Activated naive CD4-positive, alpha-beta T cell treated with anti-CD3 and anti-CD28 coated beads for 36 hours (primary cell): ENCODE measurements at regions of chrX and their contacts with region 1.

Region 1: DNA sequence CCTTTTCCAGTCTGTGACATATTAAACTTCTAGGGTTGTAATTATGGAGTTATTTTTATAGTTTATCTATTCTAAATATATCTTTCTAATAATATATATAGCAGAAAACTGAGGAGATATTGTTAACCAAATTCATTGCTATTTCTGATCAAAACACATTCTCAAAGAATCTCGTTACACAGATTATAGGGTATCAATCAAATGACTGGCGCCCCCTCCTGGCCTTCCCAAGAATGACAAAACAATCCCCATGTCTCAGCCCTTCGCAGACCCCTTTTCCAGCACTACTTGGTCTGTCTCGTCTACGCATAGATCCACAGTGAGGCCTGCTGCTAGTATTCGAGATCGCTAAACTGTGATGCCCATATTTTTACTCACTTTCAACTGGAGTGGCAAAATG is 209.3 kb downstream of the GPC3 start:
- DNase-seq: peak; percentile 64
- H3K4me3 Mint-ChIP-seq: no peak overlapping the region
- H3K27ac Mint-ChIP-seq: no peak overlapping the region
- H3K4me1 Mint-ChIP-seq: no peaks in the 10 kb centered on the region
- H3K27me3 Mint-ChIP-seq: no peaks in the 10 kb centered on the region

Region 2: GRCh38 chrX:132957211-132958090 is 818.6 kb before region 1 on chrX:
- CTCF ChIA-PET with region 1: no interaction called
- intact Hi-C with region 1: loop called (anchors 10 kb)
- DNase-seq: peak; percentile 38
- H3K4me3 Mint-ChIP-seq: peak overlapping the region; percentile 77
- H3K27ac Mint-ChIP-seq: no peak overlapping the region
- H3K4me1 Mint-ChIP-seq: peaks cover 2% of the 10 kb centered on the region
- H3K27me3 Mint-ChIP-seq: peaks cover 31% of the 10 kb centered on the region

Region 3: DNA sequence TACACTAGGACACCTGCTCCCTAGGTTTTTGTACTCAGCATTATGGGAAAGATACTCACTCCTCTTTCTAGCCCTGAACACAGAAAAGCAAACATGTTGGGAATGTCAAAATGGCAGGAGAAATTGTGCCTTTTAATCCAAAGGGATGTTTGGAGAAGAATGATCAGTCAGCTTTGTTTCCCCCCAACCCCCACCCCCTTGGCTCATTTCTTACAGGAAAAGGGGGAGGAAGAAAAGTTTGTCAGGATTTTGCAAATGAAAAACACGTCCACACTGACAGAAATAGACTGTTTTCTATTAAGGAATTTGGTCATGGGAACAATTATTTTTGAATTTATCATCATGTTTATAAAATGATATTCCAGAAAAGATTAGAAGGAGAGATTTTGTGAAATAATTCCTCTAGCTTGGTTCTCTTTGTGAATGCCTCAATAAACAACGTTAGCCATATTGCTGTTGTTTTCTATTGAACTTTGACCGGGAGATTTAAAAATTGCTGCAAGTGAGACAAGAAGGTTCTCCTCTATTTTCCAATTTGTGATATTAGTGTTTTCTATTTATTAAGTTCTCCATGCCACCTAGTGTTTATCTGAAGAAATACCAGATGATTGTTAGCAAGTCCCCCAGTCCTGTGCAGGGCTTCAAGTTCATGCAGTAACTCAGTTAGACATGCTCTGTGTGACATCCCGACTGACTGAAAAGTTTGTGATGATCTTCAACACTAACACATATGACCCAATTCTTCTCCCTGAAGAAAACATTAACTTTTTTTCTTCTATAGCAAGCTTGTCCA is 526.6 kb before region 1 on chrX:
- CTCF ChIA-PET with region 1: no interaction called
- intact Hi-C with region 1: no loop called
- DNase-seq: no peak
- H3K4me3 Mint-ChIP-seq: no peak overlapping the region
- H3K27ac Mint-ChIP-seq: no peak overlapping the region
- H3K4me1 Mint-ChIP-seq: no peaks in the 10 kb centered on the region
- H3K27me3 Mint-ChIP-seq: no peaks in the 10 kb centered on the region

Region 4: GRCh38 chrX:133698298-133698697 is 77.8 kb before region 1 on chrX:
- CTCF ChIA-PET with region 1: interaction called, 6 read pairs
- intact Hi-C with region 1: loop called (anchors 1 kb)
- DNase-seq: no peak
- H3K4me3 Mint-ChIP-seq: no peak overlapping the region
- H3K27ac Mint-ChIP-seq: no peak overlapping the region
- H3K4me1 Mint-ChIP-seq: no peaks in the 10 kb centered on the region
- H3K27me3 Mint-ChIP-seq: no peaks in the 10 kb centered on the region

Region 5: GRCh38 chrX:133745349-133745748 is 30.7 kb before region 1 on chrX:
- CTCF ChIA-PET with region 1: interaction called, 8 read pairs
- intact Hi-C with region 1: loop called (anchors 1 kb)
- DNase-seq: peak; percentile 37
- H3K4me3 Mint-ChIP-seq: no peak overlapping the region
- H3K27ac Mint-ChIP-seq: no peak overlapping the region
- H3K4me1 Mint-ChIP-seq: peaks cover 54% of the 10 kb centered on the region
- H3K27me3 Mint-ChIP-seq: no peaks in the 10 kb centered on the region

Region 6: GRCh38 chrX:133897593-133898163 is 121.6 kb after region 1 on chrX:
- CTCF ChIA-PET with region 1: no interaction called
- intact Hi-C with region 1: no loop called
- DNase-seq: no peak
- H3K4me3 Mint-ChIP-seq: no peak overlapping the region
- H3K27ac Mint-ChIP-seq: no peak overlapping the region
- H3K4me1 Mint-ChIP-seq: no peaks in the 10 kb centered on the region
- H3K27me3 Mint-ChIP-seq: peaks cover 2% of the 10 kb centered on the region

Region 7: DNA sequence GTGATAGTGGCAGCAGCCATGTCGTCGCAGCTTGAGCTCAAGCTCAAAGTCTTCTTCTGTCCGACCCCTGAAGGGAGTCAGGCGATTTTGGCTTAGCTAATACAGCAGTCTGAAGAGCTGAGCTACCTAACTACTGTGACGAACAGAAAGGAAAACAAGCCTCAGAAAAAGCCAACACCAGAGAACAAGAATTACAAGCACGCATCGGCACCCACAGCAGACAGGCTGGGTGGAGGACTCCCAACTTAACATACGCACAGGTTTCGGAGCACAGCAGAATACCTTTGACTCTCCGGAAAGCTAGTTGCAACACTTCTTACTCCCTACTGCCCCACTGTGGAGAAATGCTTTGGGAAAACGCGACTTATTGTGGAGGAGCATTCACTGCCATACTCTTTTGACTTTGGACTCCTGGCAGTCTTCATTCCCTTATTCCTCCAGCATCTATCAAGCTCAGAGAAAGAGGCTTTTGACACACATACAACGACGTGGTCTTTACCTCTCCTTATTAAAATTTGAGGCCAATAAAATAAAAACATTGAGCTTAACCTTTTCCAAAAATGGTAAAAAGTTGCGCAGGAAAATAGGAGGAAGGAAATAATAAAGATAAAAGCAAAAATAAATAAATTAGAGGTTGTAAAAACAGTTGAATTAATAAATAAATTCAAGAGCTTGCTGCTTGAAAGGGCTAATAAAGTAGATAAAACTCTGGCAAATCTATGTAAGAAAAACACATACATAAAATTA is 250.7 kb after region 1 on chrX:
- CTCF ChIA-PET with region 1: no interaction called
- intact Hi-C with region 1: no loop called
- DNase-seq: peak; percentile 64
- H3K4me3 Mint-ChIP-seq: peak overlapping the region; percentile 29
- H3K27ac Mint-ChIP-seq: no peak overlapping the region
- H3K4me1 Mint-ChIP-seq: peaks cover 6% of the 10 kb centered on the region
- H3K27me3 Mint-ChIP-seq: no peaks in the 10 kb centered on the region